Activated CD8-positive, alpha-beta T cell treated with anti-CD3 and anti-CD28 coated beads, Interleukin-2, amount 10 ng/mL, durations not matched to agents 7 days and 5 days (primary cell): ENCODE measurements at regions of chr17 and their contacts with region 1.

Region 1: DNA sequence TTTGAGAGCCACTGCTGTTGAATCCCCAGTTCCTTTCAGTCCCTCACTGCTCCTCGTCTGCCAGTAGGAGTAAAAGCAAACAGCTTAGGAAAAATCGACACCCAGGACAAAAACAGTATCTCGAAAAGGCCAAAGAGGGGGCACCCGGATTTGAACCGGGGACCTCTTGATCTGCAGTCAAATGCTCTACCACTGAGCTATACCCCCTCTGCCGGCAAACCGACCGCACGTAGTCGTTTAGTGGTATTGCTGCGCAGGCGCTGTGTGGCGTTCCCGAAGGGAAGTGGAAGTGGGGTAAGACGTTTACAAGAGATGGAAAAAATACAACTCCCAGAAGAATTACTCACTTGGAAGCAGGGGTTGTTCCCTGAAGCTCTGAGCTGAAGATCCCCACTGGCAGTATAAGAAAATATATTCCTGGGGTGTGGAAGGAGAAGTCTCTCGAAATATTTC is 2.2 kb upstream of the PLXDC1 start:
- DNase-seq: peak; percentile 93
- ATAC-seq: peak; percentile 62
- H3K4me3 Mint-ChIP-seq: peak overlapping the region; percentile 98
- H3K27ac Mint-ChIP-seq: peak overlapping the region; percentile 93
- H3K4me1 Mint-ChIP-seq: peaks cover 35% of the 10 kb centered on the region
- H3K27me3 Mint-ChIP-seq: peaks cover 23% of the 10 kb centered on the region

Region 2: DNA sequence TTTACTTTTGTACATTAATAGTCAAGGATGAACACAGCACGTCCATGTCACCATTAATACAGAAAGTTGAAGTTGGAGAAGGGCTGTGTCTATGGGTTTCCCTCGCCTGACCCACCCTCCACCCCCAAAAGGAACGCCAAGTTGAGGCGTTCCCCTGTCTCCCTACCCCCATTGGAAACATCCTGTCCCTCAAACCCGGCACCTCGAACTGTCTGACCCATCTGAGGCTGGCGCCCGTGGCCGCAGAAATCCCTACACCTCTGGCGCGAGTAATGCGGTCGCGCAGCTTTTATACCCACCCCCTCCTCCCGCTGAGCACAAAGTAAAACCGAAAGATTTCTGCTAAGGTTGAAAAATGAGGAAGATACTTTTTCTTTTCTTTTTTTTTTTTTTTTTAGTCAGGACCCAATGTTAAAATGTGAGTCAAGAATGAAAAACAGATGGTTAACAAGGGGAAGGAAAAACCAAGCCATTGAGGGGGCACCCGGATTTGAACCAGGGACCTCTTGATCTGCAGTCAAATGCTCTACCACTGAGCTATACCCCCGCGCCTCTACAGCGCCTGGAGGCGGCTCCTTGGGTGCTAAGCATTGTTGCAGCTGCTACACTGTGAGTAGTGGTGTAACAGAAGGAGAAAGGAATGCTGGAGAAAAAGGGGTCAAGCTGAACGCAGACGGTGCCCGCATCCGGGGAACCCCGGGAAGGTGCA is 284.7 kb before region 1 on chr17:
- CTCF ChIA-PET with region 1: interaction called, 38 read pairs
- POLR2A ChIA-PET with region 1: interaction called, 9 read pairs
- DNase-seq: peak; percentile 90
- ATAC-seq: peak; percentile 54
- H3K4me3 Mint-ChIP-seq: peak overlapping the region; percentile 99
- H3K27ac Mint-ChIP-seq: peak overlapping the region; percentile 85
- H3K4me1 Mint-ChIP-seq: peaks cover 42% of the 10 kb centered on the region
- H3K27me3 Mint-ChIP-seq: no peaks in the 10 kb centered on the region

Region 3: DNA sequence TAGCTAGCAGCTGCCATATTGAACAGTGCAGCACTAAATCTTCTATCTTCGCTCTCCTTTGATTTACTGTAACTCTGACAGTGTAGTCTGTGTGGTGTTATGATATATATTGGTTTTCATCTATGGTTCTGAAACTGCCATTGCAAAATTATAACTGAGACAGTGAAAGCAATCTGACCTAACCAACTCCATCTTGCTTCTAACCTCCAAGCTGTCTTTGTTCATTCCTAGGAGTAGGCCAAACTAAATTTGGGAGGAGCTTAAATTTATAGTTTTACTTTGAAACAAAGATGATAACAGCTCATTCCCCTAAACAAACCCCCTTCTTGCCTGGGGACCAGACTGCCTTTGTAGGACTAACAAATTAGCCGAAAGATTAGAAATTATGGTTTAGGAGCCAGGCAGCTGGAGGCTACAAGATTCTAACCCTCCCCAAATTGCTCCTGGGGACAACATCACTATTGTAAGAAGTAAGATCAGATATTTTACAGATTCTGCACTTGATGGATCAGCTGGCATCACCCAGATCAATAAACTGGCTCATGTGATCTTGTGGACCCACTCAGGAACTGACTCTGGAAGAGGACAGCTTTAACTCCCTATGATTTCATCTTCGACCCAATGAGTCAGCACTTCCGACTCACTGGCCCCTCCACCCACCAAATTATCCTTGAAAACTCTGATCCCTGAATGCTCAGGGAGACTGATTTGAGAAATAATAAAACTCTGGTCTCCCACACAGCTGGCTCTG is 139.4 kb before region 1 on chr17:
- CTCF ChIA-PET with region 1: interaction called, 10 read pairs
- POLR2A ChIA-PET with region 1: no interaction called
- DNase-seq: no peak
- ATAC-seq: no peak
- H3K4me3 Mint-ChIP-seq: no peak overlapping the region
- H3K27ac Mint-ChIP-seq: no peak overlapping the region
- H3K4me1 Mint-ChIP-seq: peaks cover 27% of the 10 kb centered on the region
- H3K27me3 Mint-ChIP-seq: no peaks in the 10 kb centered on the region

Region 4: DNA sequence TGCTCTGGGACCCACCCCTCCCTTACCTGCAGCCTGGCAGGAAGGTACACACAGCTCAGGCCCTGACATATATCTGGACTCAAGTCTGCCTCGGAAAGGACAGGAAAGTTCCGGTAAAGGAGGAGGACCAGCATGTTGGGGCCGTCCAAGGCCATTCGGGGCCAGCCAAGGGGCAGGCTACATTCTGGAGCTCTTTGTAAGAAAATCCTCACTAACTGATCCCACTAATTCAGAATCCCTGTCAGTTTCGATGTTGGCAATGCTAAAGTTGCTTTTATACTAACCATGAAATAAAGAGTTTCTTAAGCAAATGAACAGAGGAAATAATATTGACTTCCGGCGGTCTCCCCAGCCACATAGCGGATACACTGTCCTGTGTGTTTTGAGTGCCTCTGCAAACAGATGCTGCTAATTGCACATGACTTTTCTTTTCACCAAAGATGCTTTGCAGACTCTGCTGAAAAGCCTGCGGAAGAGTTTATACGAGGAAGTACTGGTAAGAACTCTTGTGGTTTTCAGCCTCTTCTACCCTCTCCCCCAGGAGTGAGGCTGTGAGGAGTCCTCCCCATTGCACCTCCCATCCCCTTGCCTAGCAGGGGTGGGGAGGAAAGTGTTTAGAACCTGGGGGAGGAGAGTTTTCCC is 57.0 kb before region 1 on chr17:
- CTCF ChIA-PET with region 1: interaction called, 24 read pairs
- POLR2A ChIA-PET with region 1: interaction called, 8 read pairs
- DNase-seq: peak; percentile 81
- ATAC-seq: peak; percentile 55
- H3K4me3 Mint-ChIP-seq: peak overlapping the region; percentile 67
- H3K27ac Mint-ChIP-seq: peak overlapping the region; percentile 92
- H3K4me1 Mint-ChIP-seq: peaks cover 65% of the 10 kb centered on the region
- H3K27me3 Mint-ChIP-seq: peaks cover 3% of the 10 kb centered on the region

Region 5: DNA sequence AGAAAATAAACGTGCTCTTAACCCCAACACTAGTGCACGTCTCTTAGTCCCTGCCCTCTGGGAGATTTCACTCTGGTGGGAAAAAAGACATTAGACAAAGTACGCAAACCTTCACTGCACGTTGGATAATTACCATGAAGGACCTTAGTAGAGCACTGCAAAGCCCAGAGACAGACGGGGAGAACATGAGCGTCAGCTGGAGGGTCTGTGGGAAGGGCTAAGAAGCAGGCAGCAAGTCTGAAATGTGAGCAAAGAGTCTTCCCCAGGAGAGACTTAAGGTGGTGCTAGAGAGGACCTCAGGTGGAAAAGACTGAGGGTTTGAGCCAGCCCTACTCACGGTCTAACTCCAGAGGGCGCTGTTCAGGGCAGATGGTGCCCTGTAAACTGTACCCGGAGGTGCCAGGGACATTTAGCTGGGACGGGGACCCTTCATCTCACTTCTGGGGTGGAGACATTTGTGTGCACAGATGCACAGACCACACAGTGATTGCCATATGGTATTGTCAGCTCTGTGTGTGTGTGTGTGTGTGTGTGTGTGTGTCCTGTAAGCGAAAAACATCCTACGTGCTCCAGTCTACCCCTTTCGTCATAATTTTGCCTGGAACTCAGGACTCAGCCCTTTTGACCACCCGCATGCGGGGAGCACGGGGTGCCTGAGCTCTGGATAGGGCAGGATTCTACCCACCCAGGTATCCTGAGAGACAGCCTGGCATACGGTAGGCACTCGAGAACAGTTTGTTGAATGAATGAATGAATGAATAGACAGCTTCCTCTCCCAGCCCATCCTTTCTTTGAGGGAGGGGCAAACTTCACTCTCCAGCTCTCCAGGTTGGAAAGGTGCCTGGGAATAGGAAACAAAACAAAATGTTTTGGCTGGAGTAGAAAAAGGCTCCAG is 82.2 kb after region 1 on chr17:
- CTCF ChIA-PET with region 1: interaction called, 10 read pairs
- POLR2A ChIA-PET with region 1: no interaction called
- DNase-seq: peak; percentile 76
- ATAC-seq: peak; percentile 70
- H3K4me3 Mint-ChIP-seq: no peak overlapping the region
- H3K27ac Mint-ChIP-seq: no peak overlapping the region
- H3K4me1 Mint-ChIP-seq: peaks cover 33% of the 10 kb centered on the region
- H3K27me3 Mint-ChIP-seq: peaks cover 3% of the 10 kb centered on the region